Right ventricle myocardium inferior (tissue), 1 donor: ENCODE measurements at regions of chr15 and their contacts with region 1.

Region 1: GRCh38 chr15:81336568-81336967 is 12.6 kb upstream of the STARD5 start:
- DNase-seq: no peak
- ATAC-seq: no peak

Region 2: GRCh38 chr15:81274931-81275707 is 61.4 kb before region 1 on chr15:
- intact Hi-C with region 1: loop called (anchors 5 kb)
- DNase-seq: peak; percentile 67
- ATAC-seq: peak; percentile 74

Region 3: DNA sequence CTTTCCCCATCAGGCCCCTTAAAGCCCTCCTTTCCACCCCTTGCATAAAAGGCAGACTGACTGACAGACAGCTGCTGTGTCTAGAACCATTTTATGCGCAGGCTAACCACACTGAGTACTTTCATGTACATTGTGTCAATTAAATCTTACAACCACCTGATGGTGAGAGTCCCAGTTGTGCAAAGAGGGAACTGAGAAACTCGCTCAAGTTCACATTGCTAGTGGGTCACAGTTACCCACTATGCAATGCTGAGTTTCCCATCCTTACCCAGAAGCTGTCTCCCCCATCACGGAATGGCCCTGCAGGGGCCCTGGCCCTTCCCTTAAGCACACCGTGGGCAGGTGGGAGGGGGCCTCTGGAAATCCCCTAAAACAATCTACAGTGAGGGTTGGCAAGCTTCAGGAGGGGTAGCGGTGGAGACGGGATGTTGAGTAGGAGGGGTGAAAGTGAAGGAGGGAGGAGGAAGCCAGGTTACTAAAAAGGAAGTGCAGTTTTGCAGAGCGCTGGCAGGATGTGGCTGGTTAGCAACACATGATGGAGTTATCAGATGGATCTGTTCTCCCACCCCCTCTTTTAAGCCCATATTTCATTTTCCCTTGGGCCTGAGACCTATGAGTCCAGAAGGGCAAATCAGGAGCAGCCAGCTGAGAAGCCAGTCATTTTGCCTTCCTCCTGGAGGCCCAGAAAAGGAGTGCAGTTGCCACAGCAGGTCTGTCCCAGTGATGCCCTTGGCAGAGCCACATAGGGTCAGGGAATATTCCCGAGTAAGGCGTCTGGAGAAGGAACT is 42.6 kb before region 1 on chr15:
- intact Hi-C with region 1: loop called (anchors 1 kb)
- DNase-seq: no peak
- ATAC-seq: no peak